ENCODE measurements at regions of chr5 and their contacts with region 1.

Region 1: GRCh38 chr5:140157032-140157803 is 17.8 kb upstream of the CYSTM1 start:
- DNase-seq: peak; percentile 93
- H3K4me3 Mint-ChIP-seq: peak overlapping the region; percentile 62
- H3K27ac Mint-ChIP-seq: peak overlapping the region; percentile 9
- H3K4me1 Mint-ChIP-seq: peaks cover 9% of the 10 kb centered on the region
- H3K27me3 Mint-ChIP-seq: no peaks in the 10 kb centered on the region
- CTCF ChIP-seq: peak; percentile 97

Region 2: DNA sequence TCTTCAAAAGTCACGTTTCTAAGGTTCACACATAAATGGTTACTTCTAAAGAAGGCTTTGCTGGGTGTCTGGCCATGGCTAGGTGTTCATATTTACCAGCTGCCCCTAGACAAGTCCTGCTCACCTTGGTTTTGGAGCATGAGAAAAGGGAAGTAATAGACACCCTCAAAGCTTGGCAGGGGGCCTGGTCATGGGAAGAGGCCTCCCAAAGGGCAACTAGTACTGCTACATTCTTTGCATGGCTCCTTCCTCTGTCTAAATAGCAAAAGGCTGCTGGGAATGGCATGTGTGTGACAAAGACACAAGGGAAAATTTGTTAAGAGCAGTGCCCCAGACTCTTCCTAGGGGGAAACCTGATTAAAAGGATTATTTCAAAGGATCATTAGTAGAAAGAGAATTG is 207.5 kb before region 1 on chr5:
- CTCF ChIA-PET with region 1: no interaction called
- POLR2A ChIA-PET with region 1: no interaction called
- intact Hi-C with region 1: no loop called
- DNase-seq: no peak
- H3K4me3 Mint-ChIP-seq: no peak overlapping the region
- H3K27ac Mint-ChIP-seq: no peak overlapping the region
- H3K4me1 Mint-ChIP-seq: no peaks in the 10 kb centered on the region
- H3K27me3 Mint-ChIP-seq: peaks cover 77% of the 10 kb centered on the region
- CTCF ChIP-seq: no peak

Region 3: DNA sequence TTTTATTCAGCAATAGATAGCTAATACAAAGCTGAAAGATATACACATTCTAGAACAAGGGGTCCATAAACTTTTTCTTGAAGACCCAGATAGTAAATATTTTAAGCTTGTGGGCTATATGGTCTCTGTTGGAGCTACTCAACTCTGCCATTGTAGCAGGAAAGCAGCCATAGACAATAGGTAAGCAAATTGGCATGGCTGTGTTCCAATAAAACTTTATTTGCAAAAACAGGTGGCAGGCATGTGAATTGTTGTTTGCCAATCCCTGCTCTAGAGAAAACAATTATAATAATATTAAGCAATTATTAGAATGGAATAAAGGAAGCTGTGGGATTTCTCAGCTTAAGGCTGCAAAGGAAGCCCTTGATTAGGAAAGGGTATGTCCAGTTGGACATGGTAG is 76.2 kb before region 1 on chr5:
- CTCF ChIA-PET with region 1: interaction called, 215 read pairs
- POLR2A ChIA-PET with region 1: no interaction called
- intact Hi-C with region 1: no loop called
- DNase-seq: no peak
- H3K4me3 Mint-ChIP-seq: no peak overlapping the region
- H3K27ac Mint-ChIP-seq: no peak overlapping the region
- H3K4me1 Mint-ChIP-seq: no peaks in the 10 kb centered on the region
- H3K27me3 Mint-ChIP-seq: peaks cover 45% of the 10 kb centered on the region
- CTCF ChIP-seq: no peak

Region 4: DNA sequence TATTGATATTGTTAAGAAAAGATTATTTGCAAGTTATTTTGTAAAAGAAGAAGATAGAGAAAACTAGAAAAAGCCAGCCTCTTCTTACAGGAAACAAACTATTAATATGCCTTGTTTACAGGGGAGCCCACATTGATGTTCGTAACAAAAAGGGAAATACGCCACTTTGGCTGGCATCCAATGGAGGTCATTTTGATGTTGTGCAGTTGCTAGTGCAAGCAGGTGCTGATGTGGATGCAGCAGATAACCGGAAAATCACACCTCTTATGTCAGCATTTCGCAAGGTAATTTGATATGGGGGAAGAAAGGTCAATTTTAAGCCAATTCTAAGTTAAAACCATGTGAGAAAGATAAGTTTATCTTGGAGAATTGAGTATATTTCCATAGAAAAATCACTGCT is 352.7 kb after region 1 on chr5:
- CTCF ChIA-PET with region 1: no interaction called
- POLR2A ChIA-PET with region 1: no interaction called
- intact Hi-C with region 1: no loop called
- DNase-seq: no peak
- H3K4me3 Mint-ChIP-seq: no peak overlapping the region
- H3K27ac Mint-ChIP-seq: no peak overlapping the region
- H3K4me1 Mint-ChIP-seq: no peaks in the 10 kb centered on the region
- H3K27me3 Mint-ChIP-seq: no peaks in the 10 kb centered on the region
- CTCF ChIP-seq: no peak